ENCODE measurements at regions of chr4 and their contacts with region 1.

Region 1: DNA sequence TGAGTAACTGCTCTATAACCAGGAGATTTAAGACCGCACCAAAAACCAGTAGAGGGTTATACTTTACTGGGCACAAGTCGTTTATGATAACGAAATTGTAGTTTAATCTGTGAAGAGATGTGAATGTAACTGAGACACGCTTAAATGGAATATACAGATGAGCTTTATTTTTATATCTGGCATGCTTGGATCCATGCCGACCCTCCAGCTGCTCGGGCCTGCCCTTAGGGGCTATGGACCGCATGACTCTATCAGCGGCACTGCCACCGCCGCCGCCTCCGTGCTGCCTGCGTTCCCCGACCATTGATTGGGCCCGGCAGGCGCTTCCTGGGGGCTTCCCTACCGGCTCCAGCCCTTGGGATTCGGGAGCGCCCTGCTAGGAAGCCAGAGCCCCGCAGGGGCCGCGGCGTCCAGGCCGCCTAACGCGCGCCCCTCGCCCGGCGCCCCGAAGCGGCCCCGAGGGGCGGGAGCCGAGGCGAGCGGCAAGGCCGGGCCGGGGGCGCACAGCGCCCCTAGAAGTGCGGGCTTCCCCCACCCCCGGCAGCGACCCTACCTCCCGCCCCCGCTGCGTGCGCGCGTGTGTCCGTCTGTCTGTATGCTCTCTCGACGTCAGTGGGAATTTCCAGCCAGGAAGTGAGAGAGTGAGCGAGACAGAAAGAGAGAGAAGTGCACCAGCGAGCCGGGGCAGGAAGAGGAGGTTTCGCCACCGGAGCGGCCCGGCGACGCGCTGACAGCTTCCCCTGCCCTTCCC is at the start of gene NFKB1:
- DNase-seq: peak; percentile 95
- H3K4me3 Mint-ChIP-seq: peak within 1 kb of the TSS; percentile 95
- H3K27ac Mint-ChIP-seq: peak within 1 kb of the TSS; percentile 95
- H3K4me1 Mint-ChIP-seq: peaks cover 22% of the 10 kb centered on the region
- H3K27me3 Mint-ChIP-seq: no peaks in the 10 kb centered on the region
- total RNA-seq, gene NFKB1: 146 and 148 TPM in 2 replicates

Region 2: GRCh38 chr4:102449751-102450352 is 51.0 kb before region 1 on chr4:
- intact Hi-C with region 1: loop called (anchors 1 kb)
- DNase-seq: peak; percentile 89
- H3K4me3 Mint-ChIP-seq: no peak overlapping the region
- H3K27ac Mint-ChIP-seq: no peak overlapping the region
- H3K4me1 Mint-ChIP-seq: peaks cover 42% of the 10 kb centered on the region
- H3K27me3 Mint-ChIP-seq: no peaks in the 10 kb centered on the region

Region 3: GRCh38 chr4:102525097-102525496 is 24.2 kb after region 1 on chr4:
- intact Hi-C with region 1: loop called (anchors 1 kb)
- DNase-seq: no peak
- H3K4me3 Mint-ChIP-seq: peak overlapping the region; percentile 44
- H3K27ac Mint-ChIP-seq: peak overlapping the region; percentile 42
- H3K4me1 Mint-ChIP-seq: peaks cover 78% of the 10 kb centered on the region
- H3K27me3 Mint-ChIP-seq: no peaks in the 10 kb centered on the region

Region 4: GRCh38 chr4:103008875-103009729 is 508.2 kb after region 1 on chr4:
- intact Hi-C with region 1: loop called (anchors 5 kb)
- DNase-seq: peak; percentile 83
- H3K4me3 Mint-ChIP-seq: no peak overlapping the region
- H3K27ac Mint-ChIP-seq: no peak overlapping the region
- H3K4me1 Mint-ChIP-seq: no peaks in the 10 kb centered on the region
- H3K27me3 Mint-ChIP-seq: peaks cover 8% of the 10 kb centered on the region

Region 5: DNA sequence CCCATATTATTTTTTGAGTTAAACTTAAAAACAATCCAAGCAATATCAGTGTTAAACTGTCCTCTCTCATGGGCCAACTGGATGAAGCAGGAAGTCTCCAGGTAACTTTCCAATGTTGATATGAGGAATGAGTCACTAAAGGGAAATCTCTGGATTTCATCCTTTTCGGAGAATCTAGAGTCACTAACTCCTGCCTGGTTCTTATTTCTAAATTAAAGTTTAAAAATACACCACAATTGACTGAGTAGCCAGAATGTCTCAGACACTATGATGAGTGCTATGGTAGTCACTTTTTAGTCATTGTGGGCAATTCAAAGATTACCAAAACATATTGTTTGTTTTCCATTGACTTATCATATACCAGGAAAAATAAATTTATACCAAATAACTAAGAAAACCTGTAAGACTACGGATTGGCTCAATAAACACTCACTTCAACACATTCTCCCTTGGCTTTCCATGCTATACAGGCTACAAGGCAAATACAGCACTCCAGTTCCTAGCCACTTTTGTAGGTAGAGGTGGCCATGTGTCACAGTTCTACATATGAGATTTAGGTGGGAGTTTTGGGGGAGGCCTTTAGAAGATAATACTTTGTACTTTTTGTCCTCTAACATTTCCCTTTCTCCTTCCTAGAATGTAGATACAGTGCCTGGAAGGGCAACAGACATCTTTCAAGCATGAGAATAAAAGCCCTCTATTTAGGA is 567.1 kb after region 1 on chr4:
- intact Hi-C with region 1: no loop called
- DNase-seq: no peak
- H3K4me3 Mint-ChIP-seq: no peak overlapping the region
- H3K27ac Mint-ChIP-seq: no peak overlapping the region
- H3K4me1 Mint-ChIP-seq: peaks cover 26% of the 10 kb centered on the region
- H3K27me3 Mint-ChIP-seq: no peaks in the 10 kb centered on the region

Measured in activated CD4-positive, alpha-beta T cell treated with anti-CD3 and anti-CD28 coated beads, Interleukin-2, amount 10 ng/mL, durations not matched to agents 24 days and 14 days (primary cell).